Posterior vena cava (tissue), 2 donors: ENCODE measurements at regions of chr16 and their contacts with region 1.

Region 1: DNA sequence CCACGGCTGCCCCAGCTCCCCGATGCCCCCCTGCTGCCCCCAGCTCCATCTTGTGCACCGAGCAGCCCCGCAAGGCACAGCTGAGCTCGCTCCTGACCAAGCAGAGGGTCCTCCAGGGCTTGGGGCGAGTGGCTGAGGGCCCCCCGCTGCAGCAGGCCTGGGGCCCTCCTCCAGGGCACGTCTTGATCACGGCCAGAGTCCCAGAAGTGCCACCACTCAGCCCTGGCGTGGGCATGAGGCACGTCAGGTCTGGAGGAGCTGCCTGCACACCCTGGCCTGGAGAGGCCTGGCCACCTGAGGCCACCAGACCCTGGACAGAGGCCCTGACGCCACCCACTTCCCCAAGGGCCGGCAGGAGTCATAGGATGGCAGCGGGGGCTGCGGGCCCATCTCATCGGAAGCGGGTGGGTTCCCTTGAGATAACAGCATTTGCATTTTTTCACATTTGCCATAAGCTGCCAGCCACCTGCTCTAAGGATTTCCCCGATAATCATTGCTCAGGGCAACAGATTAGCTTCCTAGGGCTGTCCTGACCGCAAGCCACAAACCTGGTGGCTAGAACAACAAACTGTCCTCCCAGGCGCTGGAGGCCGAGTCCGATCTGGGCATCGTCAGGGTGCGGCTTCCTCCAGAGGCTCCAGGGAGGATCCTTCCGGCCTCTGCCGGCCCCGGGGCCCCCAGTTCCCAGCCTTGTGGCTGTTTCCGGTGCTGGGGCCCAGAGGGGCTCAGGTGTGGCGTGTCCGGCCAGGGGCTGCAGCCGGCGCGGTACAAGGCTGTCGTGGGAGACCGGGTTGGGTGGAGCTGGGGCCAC is 23.9 kb upstream of the C1QTNF8 start:
- DNase-seq: no peak

Region 2: DNA sequence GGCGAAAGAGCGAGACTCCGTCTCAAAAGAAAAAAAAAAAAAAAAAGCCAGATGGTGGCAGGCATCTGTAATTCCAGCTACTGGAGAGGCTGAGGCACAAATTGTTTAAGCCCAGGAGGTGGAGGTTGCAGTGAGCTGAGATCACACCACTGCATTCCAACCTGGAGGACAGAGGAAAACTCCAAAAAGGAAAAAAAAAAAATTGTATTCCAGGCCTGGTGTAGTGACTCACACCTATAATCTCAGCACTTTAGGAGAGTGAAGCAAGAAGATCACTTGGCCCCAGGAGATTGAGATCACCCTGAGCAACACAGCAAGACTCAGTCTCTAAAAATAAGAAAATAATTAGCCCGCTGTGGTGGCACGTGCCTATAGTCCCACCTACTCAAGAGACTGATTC is 919.6 kb before region 1 on chr16:
- intact Hi-C with region 1: loop called in 1 of 2 experiments (anchors 5 kb)
- DNase-seq: no peak

Region 3: GRCh38 chr16:951660-952301 is 168.2 kb before region 1 on chr16:
- intact Hi-C with region 1: no loop called
- DNase-seq: no peak

Region 4: GRCh38 chr16:1045993-1046911 is 73.7 kb before region 1 on chr16:
- intact Hi-C with region 1: loop called in 1 of 2 experiments (anchors 2 kb)
- DNase-seq: no peak

Region 5: GRCh38 chr16:1194665-1195392 is 74.9 kb after region 1 on chr16:
- intact Hi-C with region 1: no loop called
- DNase-seq: no peak

Region 6: GRCh38 chr16:1470481-1471281 is 350.7 kb after region 1 on chr16:
- intact Hi-C with region 1: no loop called
- DNase-seq: no peak